Ascending aorta (tissue), 2 donors: ENCODE measurements at regions of chr3 and their contacts with region 1.

Region 1: DNA sequence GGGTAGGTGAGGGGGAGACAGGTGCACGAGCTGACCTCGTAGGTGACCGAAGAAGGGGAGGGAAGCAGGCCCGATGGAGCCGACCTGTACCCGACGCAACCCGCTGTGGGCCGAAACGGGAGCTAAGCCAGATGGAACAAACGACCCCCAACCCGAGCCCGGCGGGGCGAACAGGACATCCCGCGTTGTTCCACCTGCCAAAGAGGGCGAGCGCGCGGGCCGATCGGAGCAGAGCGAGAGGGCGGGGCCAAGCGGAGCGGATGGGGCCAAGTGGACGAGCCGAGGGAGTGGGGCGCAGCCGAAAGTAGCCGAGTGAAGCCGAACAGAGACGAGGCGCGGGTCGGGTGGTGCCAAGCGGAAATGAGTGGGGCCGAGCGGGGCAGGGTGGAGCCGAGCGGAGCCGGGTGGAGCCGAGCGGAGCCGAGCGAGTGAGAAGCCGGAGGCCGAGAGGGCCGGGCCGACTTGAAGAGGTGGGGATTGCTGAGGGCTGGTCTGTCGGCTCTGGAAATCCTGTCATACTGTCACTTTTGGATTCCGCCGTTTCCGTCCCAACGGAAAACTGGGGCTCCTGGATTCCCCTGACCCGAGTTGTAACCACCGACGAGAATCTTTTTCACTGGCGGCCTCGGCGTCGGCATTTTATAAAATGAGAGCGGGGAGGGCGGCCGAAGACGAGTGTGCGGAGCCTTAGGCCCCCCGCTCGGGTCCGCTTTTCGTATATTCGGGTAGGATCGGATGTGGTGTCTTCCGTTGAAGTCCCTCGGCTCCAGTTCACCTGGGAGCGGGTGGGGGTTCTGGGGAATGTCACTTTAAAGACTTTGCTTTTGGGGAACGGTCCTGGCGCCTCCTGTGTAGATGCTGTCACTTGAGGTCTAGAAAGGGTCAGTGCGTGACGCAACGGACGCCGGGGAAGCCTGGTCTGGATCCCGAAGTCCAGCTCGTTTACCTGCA is 15.6 kb upstream of the WNT7A start:
- DNase-seq: peak; percentile 82 to 97
- H3K4me3 ChIP-seq: peak overlapping the region; percentile 56 to 82
- H3K27ac ChIP-seq: peak overlapping the region; percentile 70 to 76
- H3K4me1 ChIP-seq: peaks cover 5% of the 10 kb centered on the region in 2 donors
- H3K27me3 ChIP-seq: no peaks in the 10 kb centered on the region
- CTCF ChIP-seq: no peak

Region 2: GRCh38 chr3:12484198-12484974 is 1411.0 kb before region 1 on chr3 and contains the start of gene TSEN2:
- intact Hi-C with region 1: loop called (anchors 10 kb)
- DNase-seq: peak; percentile 71 to 95
- H3K4me3 ChIP-seq: peak within 1 kb of the TSS; percentile 56 to 79
- H3K27ac ChIP-seq: peak within 1 kb of the TSS; percentile 42 to 46
- H3K4me1 ChIP-seq: peaks cover 8 to 10% of the 10 kb centered on the region in 2 donors
- H3K27me3 ChIP-seq: no peaks in the 10 kb centered on the region
- CTCF ChIP-seq: peak in 1 of 3 experiments; percentile 33
- total RNA-seq, gene TSEN2: 6.3 TPM

Region 3: DNA sequence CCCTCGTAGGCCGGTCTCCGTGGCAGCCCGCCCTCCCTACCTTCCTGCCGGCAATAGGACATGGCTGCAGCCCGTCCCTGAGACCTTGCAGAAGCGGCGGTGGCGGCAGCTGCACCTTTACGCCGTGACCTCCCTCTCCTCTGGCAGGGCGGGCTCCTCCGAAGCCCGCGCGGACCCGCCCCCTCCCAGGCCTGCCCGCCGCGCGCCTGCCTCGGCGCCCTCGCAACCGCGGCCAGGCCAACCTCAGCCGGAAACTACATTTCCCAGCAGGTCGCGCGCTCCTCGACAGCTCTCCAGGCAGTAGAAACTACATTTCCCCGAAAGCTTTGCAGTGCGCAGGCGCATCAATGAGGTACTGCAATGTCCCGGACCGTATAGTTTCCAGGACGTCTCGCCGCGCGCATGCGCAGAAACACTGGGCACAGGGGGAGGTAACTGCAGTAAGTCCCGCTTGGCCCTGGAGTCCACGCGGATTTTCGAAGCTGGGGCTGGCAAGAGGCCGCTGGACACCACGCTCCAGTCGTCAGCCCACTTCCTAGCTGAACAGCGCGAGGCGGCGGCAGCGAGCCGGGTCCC is 229.3 kb after region 1 on chr3 and contains the starts of genes CHCHD4 and TMEM43:
- intact Hi-C with region 1: loop called (anchors 1 kb)
- DNase-seq: peak; percentile 98 to 100
- H3K4me3 ChIP-seq: peak within 1 kb of the TSS; percentile 84 to 100
- H3K27ac ChIP-seq: peak within 1 kb of the TSS; percentile 96 to 98
- H3K4me1 ChIP-seq: peaks cover 19 to 26% of the 10 kb centered on the region in 2 donors
- H3K27me3 ChIP-seq: no peaks in the 10 kb centered on the region
- CTCF ChIP-seq: peak in 1 of 3 experiments; percentile 2
- total RNA-seq, gene CHCHD4: 1.9 TPM
- total RNA-seq, gene TMEM43: 166 TPM

Region 4: DNA sequence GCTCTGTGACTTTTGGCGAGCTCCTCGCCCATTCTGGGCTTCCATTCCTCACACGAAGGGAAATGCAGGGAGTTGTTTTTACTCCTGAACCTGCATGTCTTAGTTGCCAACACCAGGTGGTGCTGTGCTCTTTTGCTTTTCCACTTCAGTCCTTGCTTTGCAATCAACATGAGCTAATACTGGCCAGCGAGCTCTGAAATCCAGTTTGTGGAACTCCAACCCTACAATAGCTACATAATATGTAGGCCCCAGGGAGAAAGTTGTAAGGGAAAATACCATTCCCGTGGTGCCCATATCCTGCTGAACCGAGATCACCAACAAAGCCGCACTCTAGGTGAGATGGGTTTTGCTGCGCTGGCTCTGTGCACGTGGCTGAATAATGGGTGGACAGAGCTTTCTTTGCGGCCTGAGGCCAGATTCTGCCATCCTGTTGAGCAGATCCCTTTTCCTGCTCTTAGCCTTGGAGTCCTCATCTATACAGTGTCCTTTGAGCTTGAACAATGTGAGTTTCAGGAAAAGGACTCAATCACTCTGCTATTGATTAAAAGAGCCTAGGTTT is 308.2 kb after region 1 on chr3:
- intact Hi-C with region 1: loop called (anchors 5 kb)
- DNase-seq: peak in 1 of 2 donors; percentile 78
- H3K4me3 ChIP-seq: no peak overlapping the region
- H3K27ac ChIP-seq: peak overlapping the region in 1 of 2 donors; percentile 24
- H3K4me1 ChIP-seq: peaks cover 8 to 18% of the 10 kb centered on the region in 2 donors
- H3K27me3 ChIP-seq: no peaks in the 10 kb centered on the region
- CTCF ChIP-seq: peak; percentile 66 to 89 (median 82)

Region 5: DNA sequence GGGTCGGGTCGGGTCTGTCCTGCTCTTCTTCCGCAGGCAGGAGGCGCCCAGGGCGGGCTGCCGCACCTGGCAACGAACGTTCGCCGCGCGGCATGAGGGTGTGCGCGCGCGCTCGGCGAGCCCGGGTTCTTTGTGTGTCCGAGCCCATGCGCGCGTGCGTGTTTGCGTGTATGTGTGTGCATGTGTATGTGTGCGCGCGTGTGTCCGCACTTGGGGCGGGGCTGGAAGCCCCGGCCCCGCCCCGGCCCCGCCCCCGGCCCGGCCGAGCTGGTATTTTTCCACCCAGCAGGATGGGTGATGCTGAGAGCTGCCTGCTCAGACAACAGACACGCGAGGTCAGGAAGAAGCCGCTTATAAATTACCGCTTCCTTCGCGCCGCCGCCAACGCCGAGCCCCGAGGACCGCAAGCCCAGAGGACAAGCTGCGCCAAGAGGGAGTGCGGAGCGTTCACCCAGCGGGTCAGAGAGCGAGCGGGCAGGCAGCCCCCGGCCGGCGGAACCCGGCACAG is 506.9 kb after region 1 on chr3 and contains the start of gene SLC6A6:
- intact Hi-C with region 1: loop called (anchors 5 kb)
- DNase-seq: peak; percentile 88 to 98
- H3K4me3 ChIP-seq: peak within 1 kb of the TSS; percentile 62 to 85
- H3K27ac ChIP-seq: peak within 1 kb of the TSS; percentile 77 to 85
- H3K4me1 ChIP-seq: peaks cover 25 to 33% of the 10 kb centered on the region in 2 donors
- H3K27me3 ChIP-seq: no peaks in the 10 kb centered on the region
- CTCF ChIP-seq: peak in 2 of 3 experiments; percentile 39 to 52
- total RNA-seq, gene SLC6A6: 78.1 TPM

Region 6: DNA sequence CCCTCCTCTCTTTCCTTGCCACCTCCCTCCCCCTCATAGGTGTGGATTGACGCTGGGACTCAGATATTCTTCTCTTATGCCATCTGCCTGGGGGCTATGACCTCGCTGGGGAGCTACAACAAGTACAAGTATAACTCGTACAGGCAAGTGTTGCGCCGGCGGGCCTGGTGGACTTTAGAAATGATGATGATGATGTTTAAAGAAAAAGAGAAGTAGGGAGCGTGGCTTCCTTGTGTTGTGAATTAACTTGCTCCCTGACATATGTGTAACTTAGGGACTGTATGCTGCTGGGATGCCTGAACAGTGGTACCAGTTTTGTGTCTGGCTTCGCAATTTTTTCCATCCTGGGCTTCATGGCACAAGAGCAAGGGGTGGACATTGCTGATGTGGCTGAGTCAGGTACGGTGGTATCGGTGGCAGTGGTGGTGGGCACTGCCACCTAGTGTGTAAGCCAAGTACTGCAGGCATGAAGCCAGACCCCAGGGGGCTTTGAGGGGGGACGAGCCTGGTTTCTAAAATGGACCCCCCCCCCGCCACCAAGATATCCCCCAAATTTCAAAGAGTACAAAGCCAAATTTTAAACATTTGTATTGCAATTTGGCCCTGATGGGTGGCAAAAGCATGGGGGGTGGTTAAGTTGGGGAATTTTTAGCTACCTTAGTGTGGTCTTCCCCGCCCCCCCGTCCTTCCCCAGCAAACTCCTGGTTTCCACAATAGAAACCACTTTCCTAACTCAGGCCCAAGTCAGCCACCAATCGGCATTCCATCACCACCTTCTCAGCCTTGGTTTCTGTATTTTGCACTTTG is 572.6 kb after region 1 on chr3:
- intact Hi-C with region 1: loop called (anchors 5 kb)
- DNase-seq: no peak
- H3K4me3 ChIP-seq: no peak overlapping the region
- H3K27ac ChIP-seq: no peak overlapping the region
- H3K4me1 ChIP-seq: no peaks in the 10 kb centered on the region
- H3K27me3 ChIP-seq: no peaks in the 10 kb centered on the region
- CTCF ChIP-seq: peak; percentile 86 to 92 (median 89)